Activated T-helper 1 cell treated with anti-CD3 and anti-CD28 coated beads, Interleukin-12 subunit alpha, Interleukin-12 subunit beta, Interleukin-2, Interleukin-4 antibody, amounts not matched to agents 30 ng/mL and 10 ng/mL and 1 ng/mL, durations not matched to agents 14 hours and 24 hours and 36 hours (primary cell): ENCODE measurements at regions of chr15 and their contacts with region 1.

Region 1: GRCh38 chr15:51380999-51381795 is 39.7 kb downstream of the GLDN start:
- DNase-seq: peak; percentile 2
- H3K4me3 Mint-ChIP-seq: no peak overlapping the region
- H3K27ac Mint-ChIP-seq: no peak overlapping the region
- H3K4me1 Mint-ChIP-seq: no peaks in the 10 kb centered on the region
- H3K27me3 Mint-ChIP-seq: peaks cover 3% of the 10 kb centered on the region

Region 2: DNA sequence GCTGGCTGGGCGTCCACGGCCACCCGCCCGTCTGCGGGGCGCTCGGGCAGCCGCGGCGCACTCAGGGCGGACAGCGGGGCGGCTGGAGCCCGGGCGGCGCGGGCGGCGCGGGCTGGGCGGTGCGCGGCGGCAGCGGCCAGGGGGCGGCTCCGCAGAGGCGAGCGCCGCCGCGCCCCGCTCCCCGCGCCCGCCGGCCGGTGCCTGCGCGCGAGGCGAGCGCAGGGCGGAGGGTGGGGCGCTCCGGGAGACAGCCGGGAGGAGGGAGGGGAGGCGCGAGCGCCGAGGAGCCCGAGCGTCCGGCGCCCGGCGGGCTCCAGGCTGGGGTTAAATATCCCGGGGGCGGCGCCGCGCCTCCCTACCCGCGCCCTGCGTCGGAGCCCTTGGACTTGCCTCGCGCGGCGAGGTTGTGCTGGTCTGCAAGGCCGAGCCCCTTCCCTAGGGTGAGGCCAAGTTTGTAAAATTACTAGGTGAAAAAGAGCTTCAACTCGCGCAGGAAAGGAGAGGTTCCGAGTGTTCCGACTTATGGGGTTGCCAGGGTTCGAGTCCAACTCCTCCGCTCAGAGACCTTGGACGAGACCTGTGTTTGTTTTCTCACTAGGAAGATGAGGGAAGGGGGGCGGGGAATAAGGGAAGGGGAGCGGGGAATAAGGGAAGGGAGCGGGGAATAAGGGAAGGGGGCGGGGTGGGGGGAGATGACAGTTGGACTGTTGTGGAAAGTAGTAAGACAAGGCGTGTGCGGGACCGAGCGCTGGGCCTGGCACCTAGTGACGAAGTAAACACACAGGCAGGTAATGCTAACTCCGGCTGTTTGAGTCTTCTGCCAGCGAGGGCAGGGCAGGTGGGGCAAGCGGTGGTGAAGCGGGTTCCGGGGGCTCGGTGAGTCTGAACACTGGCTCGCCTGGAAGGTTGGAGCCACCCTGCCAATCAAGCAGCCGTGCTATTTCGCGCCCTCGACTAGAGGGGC is 286.3 kb before region 1 on chr15 and contains the start of gene TNFAIP8L3:
- intact Hi-C with region 1: no loop called
- DNase-seq: no peak
- H3K4me3 Mint-ChIP-seq: peak within 1 kb of the TSS; percentile 70
- H3K27ac Mint-ChIP-seq: no peak within 1 kb of the TSS
- H3K4me1 Mint-ChIP-seq: peaks cover 12% of the 10 kb centered on the region
- H3K27me3 Mint-ChIP-seq: peaks cover 77% of the 10 kb centered on the region
- total RNA-seq, gene TNFAIP8L3: 0.20 and 0.49 TPM in 2 replicates

Region 3: DNA sequence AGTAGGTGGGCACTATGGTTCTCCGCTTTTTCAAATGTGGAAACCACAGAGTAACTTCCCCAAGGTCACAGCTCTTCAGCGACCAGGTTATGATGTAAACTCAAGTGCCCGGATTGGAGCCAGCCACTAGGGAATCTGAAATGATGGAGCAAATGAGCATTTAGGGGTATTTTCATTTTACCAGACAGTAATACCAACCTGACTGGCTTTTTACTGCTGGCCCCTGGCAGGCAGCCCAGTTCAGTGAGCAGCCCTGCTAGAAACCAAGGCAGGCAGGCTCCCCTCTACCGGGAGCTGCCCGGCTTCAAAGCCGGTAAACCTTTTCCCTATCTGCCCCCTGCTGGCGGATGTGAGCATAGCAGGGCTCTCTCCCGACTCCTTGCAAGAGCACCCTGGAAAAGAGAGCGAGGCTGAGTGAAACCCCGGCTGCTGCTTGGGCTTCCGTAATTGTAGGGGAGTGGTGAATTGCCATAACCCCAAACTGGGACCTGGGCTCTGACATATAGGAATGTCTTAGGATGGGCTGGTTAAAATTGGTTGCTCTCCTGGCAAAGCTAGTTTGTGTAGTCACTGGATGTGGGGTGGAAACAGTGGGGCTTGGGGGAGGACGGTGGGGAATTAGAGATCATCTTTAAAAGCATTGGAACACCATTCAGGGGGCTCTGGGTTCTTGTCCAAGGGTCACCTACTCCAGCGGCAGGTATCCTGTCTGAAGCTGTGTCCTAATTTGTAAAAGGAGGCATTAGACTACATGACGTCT is 188.5 kb before region 1 on chr15:
- intact Hi-C with region 1: loop called (anchors 1 kb)
- DNase-seq: peak; percentile 54
- H3K4me3 Mint-ChIP-seq: no peak overlapping the region
- H3K27ac Mint-ChIP-seq: no peak overlapping the region
- H3K4me1 Mint-ChIP-seq: no peaks in the 10 kb centered on the region
- H3K27me3 Mint-ChIP-seq: peaks cover 33% of the 10 kb centered on the region

Region 4: DNA sequence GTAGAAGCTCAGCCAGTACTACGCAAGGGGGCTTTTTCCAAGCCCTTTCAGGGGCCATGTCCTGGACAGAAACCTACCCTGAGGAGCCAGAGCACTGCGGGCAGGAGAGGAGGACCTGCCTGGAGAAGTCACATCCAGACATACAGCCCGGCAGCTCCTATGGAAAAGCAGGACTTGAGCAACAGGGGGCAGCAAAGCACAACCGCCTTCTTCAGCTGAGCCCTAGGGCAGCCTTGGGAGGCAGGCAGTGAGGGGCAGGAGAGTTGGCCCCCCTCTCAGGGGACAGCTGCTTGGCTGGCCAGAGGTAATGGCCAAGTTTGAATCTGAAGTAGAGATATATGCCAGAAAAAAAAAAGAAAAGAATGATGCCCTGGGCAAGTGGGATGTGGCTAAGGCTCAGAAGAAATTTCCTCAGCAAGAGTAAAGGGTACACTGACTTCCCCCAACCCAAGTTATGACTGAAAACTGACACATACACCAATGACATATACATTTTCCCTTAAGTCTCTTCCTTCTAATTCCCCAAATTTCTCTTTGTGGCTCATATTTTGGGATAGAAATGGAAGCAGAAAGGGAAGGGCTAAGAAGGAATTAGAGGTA is 99.7 kb before region 1 on chr15:
- intact Hi-C with region 1: loop called (anchors 2 kb)
- DNase-seq: no peak
- H3K4me3 Mint-ChIP-seq: no peak overlapping the region
- H3K27ac Mint-ChIP-seq: no peak overlapping the region
- H3K4me1 Mint-ChIP-seq: peaks cover 15% of the 10 kb centered on the region
- H3K27me3 Mint-ChIP-seq: peaks cover 9% of the 10 kb centered on the region